ENCODE measurements at regions of chr7 and their contacts with region 1.

Region 1: GRCh38 chr7:80630605-80631405 is 7.6 kb upstream of the CD36 start:
- DNase-seq: no peak
- H3K4me3 ChIP-seq: no peak overlapping the region
- H3K27ac ChIP-seq: peak overlapping the region in 1 of 4 donors; percentile 38
- H3K4me1 ChIP-seq: peaks cover 0 to 25% (median 0%) of the 10 kb centered on the region in 4 donors
- H3K27me3 ChIP-seq: no peaks in the 10 kb centered on the region
- CTCF ChIP-seq: no peak
- EP300 ChIP-seq: no peak
- POLR2A ChIP-seq: no peak

Region 2: DNA sequence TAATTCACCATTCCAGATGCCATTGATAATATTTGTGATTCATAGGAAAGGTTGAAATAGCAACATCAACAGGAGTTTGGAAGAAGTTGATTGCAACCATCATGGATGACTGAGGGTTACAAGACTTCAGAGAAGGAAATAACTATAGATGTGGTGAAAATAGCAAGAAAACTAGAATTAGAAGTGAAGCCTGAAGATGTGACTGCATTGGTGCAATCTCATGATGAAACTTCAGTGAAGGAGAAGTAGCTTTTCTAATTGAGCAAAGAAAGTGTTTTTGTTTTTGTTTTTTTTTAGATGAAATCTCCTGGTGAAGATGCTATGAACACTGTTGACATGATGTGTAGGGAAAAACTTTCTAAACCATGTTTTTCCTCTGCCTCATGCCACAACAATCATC is 11.1 kb before region 1 on chr7:
- in situ Hi-C with region 1: no loop called
- intact Hi-C with region 1: loop called (anchors 1 kb)
- DNase-seq: no peak
- H3K4me3 ChIP-seq: no peak overlapping the region
- H3K27ac ChIP-seq: no peak overlapping the region
- H3K4me1 ChIP-seq: no peaks in the 10 kb centered on the region
- H3K27me3 ChIP-seq: no peaks in the 10 kb centered on the region
- CTCF ChIP-seq: no peak
- EP300 ChIP-seq: no peak
- POLR2A ChIP-seq: no peak

Region 3: GRCh38 chr7:80918909-80919662 is 288.3 kb after region 1 on chr7 and contains the start of gene SEMA3C:
- in situ Hi-C with region 1: no loop called
- intact Hi-C with region 1: no loop called
- DNase-seq: peak; percentile 90
- H3K4me3 ChIP-seq: peak within 1 kb of the TSS; percentile 45 to 75 (median 67)
- H3K27ac ChIP-seq: peak within 1 kb of the TSS; percentile 85 to 90 (median 89)
- H3K4me1 ChIP-seq: peaks cover 5 to 58% (median 24%) of the 10 kb centered on the region in 4 donors
- H3K27me3 ChIP-seq: no peaks in the 10 kb centered on the region
- CTCF ChIP-seq: peak in 1 of 5 experiments; percentile 13
- EP300 ChIP-seq: no peak
- POLR2A ChIP-seq: peak; percentile 86
- total RNA-seq, gene SEMA3C: 34.0 to 83.8 (median 79.9) TPM